Activated T-helper 2 cell treated with anti-CD3 and anti-CD28 coated beads, Interferon-gamma antibody, Interleukin-2, Interleukin-4, amounts not matched to agents 10 μg/mL and 5 μg/mL and 100 μg/mL, durations not matched to agents 14 hours and 24 hours and 36 hours (primary cell): ENCODE measurements at regions of chr17 and their contacts with region 1.

Region 1: DNA sequence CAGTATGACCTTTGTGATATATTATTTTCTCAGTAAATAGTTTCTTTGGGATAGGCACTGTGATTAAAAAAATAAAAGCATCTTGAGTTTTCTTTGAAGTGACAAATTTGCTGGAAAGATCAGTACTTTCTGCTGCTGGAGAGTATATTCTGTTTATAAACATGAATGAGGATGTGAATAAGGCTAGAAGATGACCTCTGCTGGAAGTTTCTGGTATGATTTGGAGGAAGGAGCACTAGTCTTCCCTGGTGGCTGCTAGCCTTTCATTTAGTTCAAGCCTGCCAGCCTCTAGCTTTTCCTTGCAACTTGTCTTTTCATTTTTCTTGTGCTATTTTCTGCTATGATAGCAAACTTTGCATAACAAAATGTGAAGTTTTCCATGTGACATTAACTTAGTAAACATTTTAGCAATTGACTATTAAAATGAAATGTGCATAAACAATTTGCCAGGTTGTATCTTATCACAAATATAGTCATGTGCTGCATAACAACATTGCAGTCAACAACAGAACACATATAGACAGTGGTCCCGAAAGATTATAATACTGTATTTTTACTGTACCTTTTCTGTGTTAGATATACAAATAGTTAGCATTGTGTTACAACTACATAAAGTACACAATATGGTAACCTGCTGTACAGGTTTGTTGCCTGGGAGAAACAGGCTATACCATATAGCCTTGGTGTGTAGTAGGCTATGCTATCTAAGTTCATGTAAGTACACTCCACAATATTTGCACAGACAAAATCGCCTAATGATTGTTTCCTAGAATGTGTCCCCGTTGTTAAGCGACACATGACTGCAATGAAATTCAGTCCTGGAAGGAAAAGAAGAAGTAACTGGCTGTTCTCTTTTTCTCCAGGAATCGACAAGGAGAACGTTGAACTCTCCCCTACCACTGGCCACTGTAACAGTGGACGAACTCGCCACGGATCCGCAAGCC is 18.1 kb upstream of the RAB11FIP4 start:
- DNase-seq: no peak
- H3K4me3 Mint-ChIP-seq: no peak overlapping the region
- H3K27ac Mint-ChIP-seq: no peak overlapping the region
- H3K4me1 Mint-ChIP-seq: peaks cover 15% of the 10 kb centered on the region
- H3K27me3 Mint-ChIP-seq: no peaks in the 10 kb centered on the region

Region 2: GRCh38 chr17:31008374-31009041 is 364.9 kb before region 1 on chr17:
- intact Hi-C with region 1: loop called (anchors 5 kb)
- DNase-seq: peak; percentile 29
- H3K4me3 Mint-ChIP-seq: peak overlapping the region; percentile 79
- H3K27ac Mint-ChIP-seq: peak overlapping the region; percentile 46
- H3K4me1 Mint-ChIP-seq: peaks cover 13% of the 10 kb centered on the region
- H3K27me3 Mint-ChIP-seq: peaks cover 22% of the 10 kb centered on the region

Region 3: GRCh38 chr17:31269578-31269983 is 103.8 kb before region 1 on chr17:
- intact Hi-C with region 1: no loop called
- DNase-seq: no peak
- H3K4me3 Mint-ChIP-seq: no peak overlapping the region
- H3K27ac Mint-ChIP-seq: no peak overlapping the region
- H3K4me1 Mint-ChIP-seq: peaks cover 2% of the 10 kb centered on the region
- H3K27me3 Mint-ChIP-seq: no peaks in the 10 kb centered on the region